ENCODE measurements at regions of chr9 and their contacts with region 1.

Region 1: GRCh38 chr9:90801583-90802289 is at the start of gene SYK:
- DNase-seq: peak; percentile 72
- ATAC-seq: peak; percentile 77
- H3K4me3 Mint-ChIP-seq: peak within 1 kb of the TSS; percentile 94
- H3K27ac Mint-ChIP-seq: peak within 1 kb of the TSS; percentile 94
- H3K4me1 Mint-ChIP-seq: peaks cover 74% of the 10 kb centered on the region
- H3K27me3 Mint-ChIP-seq: no peaks in the 10 kb centered on the region
- CTCF ChIP-seq: no peak
- total RNA-seq, gene SYK: 222 and 237 TPM in 2 replicates

Region 2: DNA sequence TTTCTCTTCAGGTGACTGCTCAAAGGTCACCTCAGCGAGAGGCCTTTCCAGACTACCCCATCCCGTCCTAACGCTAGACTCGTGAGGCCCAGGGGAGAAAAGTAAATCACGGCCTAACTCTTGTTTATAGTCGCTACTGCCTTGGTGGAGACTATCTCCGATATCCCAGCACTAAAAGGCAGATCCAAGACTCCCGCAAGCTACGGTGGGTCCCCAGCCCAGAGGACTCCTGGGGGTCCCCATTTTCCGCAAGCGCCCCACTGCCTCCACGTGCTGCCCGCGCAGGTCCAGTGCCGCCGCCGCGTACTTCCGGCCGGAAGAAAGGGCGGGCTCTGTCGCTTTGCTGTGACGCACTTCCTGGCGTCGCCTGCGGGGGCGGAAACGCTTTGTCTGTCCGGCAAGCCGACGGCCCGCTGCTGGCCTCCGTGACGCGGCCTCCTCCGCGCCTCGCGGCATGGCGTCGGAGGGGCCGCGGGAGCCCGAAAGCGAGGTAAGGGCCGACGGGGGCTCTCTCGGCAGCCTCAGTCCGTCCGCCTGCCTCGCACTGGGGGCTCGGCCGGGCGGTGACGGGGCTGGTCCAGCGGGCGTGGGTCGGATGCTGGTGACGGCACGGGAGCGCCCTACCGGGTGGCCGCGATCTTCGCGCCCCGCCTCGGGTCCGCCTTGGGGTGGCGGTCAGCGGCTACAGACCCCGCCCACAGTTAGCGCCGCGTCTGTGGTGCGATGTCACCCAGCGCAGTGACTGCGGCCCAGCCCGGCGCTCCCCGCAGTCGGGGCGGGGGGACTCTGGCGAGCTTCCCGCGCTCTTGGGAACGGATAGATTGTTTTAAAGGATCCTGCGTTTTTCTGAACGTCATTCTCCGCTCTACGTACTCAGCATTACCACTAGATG is 1483.4 kb before region 1 on chr9 and contains the start of gene SECISBP2:
- CTCF ChIA-PET with region 1: no interaction called
- POLR2A ChIA-PET with region 1: no interaction called
- intact Hi-C with region 1: loop called (anchors 10 kb)
- DNase-seq: peak; percentile 98
- ATAC-seq: peak; percentile 92
- H3K4me3 Mint-ChIP-seq: peak within 1 kb of the TSS; percentile 91
- H3K27ac Mint-ChIP-seq: peak within 1 kb of the TSS; percentile 98
- H3K4me1 Mint-ChIP-seq: peaks cover 62% of the 10 kb centered on the region
- H3K27me3 Mint-ChIP-seq: no peaks in the 10 kb centered on the region
- CTCF ChIP-seq: no peak
- total RNA-seq, gene SECISBP2: 81.5 and 97.1 TPM in 2 replicates

Region 3: GRCh38 chr9:90773617-90774016 is 28.1 kb before region 1 on chr9:
- CTCF ChIA-PET with region 1: interaction called, 7 read pairs
- POLR2A ChIA-PET with region 1: interaction called, 17 read pairs
- intact Hi-C with region 1: loop called (anchors 1 kb)
- DNase-seq: no peak
- ATAC-seq: peak; percentile 16
- H3K4me3 Mint-ChIP-seq: peak overlapping the region; percentile 28
- H3K27ac Mint-ChIP-seq: peak overlapping the region; percentile 65
- H3K4me1 Mint-ChIP-seq: peaks cover 65% of the 10 kb centered on the region
- H3K27me3 Mint-ChIP-seq: no peaks in the 10 kb centered on the region
- CTCF ChIP-seq: no peak

Region 4: GRCh38 chr9:90815183-90815943 is 13.6 kb after region 1 on chr9:
- CTCF ChIA-PET with region 1: interaction called, 7 read pairs
- POLR2A ChIA-PET with region 1: interaction called, 21 read pairs
- intact Hi-C with region 1: loop called (anchors 1 kb)
- DNase-seq: peak; percentile 47
- ATAC-seq: peak; percentile 72
- H3K4me3 Mint-ChIP-seq: peak overlapping the region; percentile 73
- H3K27ac Mint-ChIP-seq: peak overlapping the region; percentile 95
- H3K4me1 Mint-ChIP-seq: peaks cover 94% of the 10 kb centered on the region
- H3K27me3 Mint-ChIP-seq: no peaks in the 10 kb centered on the region
- CTCF ChIP-seq: no peak

Region 5: DNA sequence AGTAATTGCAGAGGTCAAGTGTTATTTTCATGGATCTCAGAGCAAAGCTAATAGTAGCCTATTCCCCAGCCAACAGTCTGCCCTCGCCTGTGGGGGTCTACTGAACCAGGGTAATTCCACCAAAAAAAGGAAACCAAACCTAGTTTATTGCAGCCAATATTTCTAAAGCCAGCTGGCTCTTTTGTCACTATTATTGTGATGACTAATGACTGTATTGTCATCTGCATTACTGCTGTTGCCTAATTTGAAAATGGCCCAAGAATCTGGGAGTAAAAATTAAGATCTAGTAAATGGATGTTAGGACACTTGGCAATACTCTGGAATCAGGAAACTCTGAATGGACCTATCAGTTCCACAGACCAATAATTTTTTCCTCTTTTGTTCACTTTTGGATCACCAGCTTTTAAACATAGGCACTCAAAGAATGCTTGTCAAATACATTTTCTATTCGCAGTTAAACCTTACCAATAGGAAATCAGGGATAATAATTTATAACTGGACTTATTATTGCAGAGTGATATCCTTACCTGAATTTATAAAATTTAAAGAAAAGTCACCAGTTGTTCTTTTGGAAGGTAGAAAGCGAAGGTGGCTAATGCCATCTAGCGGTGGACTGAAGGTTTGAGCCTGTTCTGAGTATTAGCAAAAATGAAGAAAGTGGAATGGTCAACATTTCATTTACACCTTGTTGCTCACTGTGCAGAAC is 69.0 kb after region 1 on chr9:
- CTCF ChIA-PET with region 1: interaction called, 6 read pairs
- POLR2A ChIA-PET with region 1: no interaction called
- intact Hi-C with region 1: loop called (anchors 2 kb)
- DNase-seq: no peak
- ATAC-seq: no peak
- H3K4me3 Mint-ChIP-seq: no peak overlapping the region
- H3K27ac Mint-ChIP-seq: peak overlapping the region; percentile 74
- H3K4me1 Mint-ChIP-seq: peaks cover 4% of the 10 kb centered on the region
- H3K27me3 Mint-ChIP-seq: no peaks in the 10 kb centered on the region
- CTCF ChIP-seq: peak; percentile 97

Measured in activated B cell treated with CpG ODN at 0.5 μM for 24 hours (primary cell).